Activated T-helper 1 cell treated with anti-CD3 and anti-CD28 coated beads, Interleukin-12 subunit alpha, Interleukin-12 subunit beta, Interleukin-2, Interleukin-4 antibody, amounts not matched to agents 30 ng/mL and 10 ng/mL and 1 ng/mL, durations not matched to agents 14 hours and 24 hours and 36 hours (primary cell): ENCODE measurements at regions of chr20 and their contacts with region 1.

Region 1: DNA sequence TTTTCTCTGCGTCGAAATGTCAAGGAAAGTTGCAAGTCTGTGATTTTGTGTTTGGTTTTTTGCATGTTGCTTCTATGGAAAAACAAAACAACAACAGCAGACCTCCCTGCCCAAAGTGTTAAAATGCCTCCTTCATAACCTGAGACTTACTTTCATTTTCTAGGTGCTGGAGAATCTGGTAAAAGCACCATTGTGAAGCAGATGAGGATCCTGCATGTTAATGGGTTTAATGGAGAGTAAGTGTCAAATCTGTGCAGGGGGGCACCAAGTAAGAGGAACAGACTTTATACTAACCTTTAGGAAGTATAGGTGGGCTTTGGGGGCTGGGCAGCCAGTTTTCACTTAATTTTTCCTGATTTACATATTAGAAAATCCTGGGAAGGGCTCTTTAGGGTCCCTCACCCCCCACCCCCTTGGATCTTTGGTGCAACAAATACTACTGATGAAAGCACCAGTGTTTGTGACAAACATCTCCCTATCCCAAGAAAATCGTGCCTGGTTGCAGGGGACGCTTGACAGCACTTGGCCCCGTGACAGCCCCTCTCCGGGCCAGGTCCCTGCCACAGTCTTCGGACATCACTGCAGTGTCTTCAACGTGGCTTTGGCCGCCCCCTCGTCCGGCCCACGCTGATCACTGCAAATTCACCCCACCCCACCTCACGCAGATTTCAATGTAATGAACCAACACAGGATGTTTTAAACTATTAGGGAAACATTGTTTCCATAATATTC is 43.1 kb downstream of the GNAS start:
- DNase-seq: no peak
- H3K4me3 Mint-ChIP-seq: peak overlapping the region; percentile 76
- H3K27ac Mint-ChIP-seq: peak overlapping the region; percentile 49
- H3K4me1 Mint-ChIP-seq: peaks cover 54% of the 10 kb centered on the region
- H3K27me3 Mint-ChIP-seq: no peaks in the 10 kb centered on the region

Region 2: GRCh38 chr20:58907399-58908137 is 12.0 kb after region 1 on chr20:
- intact Hi-C with region 1: loop called (anchors 1 kb)
- DNase-seq: peak; percentile 48
- H3K4me3 Mint-ChIP-seq: peak overlapping the region; percentile 81
- H3K27ac Mint-ChIP-seq: peak overlapping the region; percentile 95
- H3K4me1 Mint-ChIP-seq: peaks cover 56% of the 10 kb centered on the region
- H3K27me3 Mint-ChIP-seq: no peaks in the 10 kb centered on the region

Region 3: DNA sequence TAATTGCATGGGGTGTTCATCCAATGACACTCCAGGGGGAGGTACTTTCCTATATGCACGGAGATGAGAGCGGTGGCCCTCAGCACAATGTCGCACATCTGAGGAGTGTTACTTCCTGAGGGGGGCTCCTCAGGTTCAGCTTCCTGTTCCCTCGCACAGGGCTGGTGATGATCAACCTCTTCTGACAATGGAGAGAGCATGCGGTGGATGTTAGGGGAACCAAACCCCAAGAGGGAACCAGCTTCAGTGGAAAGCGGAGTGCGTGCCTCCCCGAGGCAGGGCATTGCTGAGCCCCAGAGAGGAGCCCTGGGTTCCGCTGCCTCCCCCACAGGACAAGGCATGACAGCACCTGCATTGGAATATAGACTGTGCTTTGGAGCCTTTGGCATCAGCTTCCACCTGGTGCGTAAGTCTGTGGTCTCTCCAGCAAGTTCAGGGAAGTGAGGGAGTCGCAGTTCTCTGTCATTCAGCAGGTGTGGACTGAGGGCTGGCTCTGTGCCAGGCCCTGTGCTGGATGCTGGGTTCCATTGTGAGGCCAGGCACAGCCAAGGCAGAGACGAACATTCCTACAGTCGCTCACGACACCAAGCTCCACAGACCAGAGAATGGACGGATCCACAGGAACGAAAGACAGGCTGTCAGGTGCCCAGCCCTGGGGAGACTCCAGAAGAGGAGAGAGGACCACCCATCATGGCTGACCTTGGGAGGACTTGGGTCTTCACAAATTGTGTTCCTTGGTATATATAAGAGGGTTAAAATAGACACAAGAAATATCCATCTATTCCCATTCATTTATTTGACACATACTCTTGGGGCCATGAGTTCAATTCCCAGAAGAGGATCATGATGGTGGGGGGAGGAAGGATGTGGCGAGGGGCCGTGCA is 264.1 kb after region 1 on chr20:
- intact Hi-C with region 1: no loop called
- DNase-seq: peak; percentile 52
- H3K4me3 Mint-ChIP-seq: peak overlapping the region; percentile 78
- H3K27ac Mint-ChIP-seq: peak overlapping the region; percentile 92
- H3K4me1 Mint-ChIP-seq: peaks cover 80% of the 10 kb centered on the region
- H3K27me3 Mint-ChIP-seq: no peaks in the 10 kb centered on the region